Activated CD4-positive, alpha-beta memory T cell treated with anti-CD3 and anti-CD28 coated beads for 36 hours (primary cell): ENCODE measurements at regions of chr2 and their contacts with region 1.

Region 1: GRCh38 chr2:63841254-63842022 is at the start of gene UGP2:
- DNase-seq: peak; percentile 91
- H3K4me3 Mint-ChIP-seq: peak within 1 kb of the TSS; percentile 99
- H3K27ac Mint-ChIP-seq: peak within 1 kb of the TSS; percentile 100
- H3K4me1 Mint-ChIP-seq: peaks cover 44% of the 10 kb centered on the region
- H3K27me3 Mint-ChIP-seq: no peaks in the 10 kb centered on the region
- total RNA-seq, gene UGP2: 113 to 119 TPM

Region 2: GRCh38 chr2:62705007-62705829 is 1136.2 kb before region 1 on chr2 and contains the start of gene EHBP1:
- CTCF ChIA-PET with region 1: no interaction called
- POLR2A ChIA-PET with region 1: no interaction called
- intact Hi-C with region 1: loop called (anchors 10 kb)
- DNase-seq: peak; percentile 98
- H3K4me3 Mint-ChIP-seq: peak within 1 kb of the TSS; percentile 76
- H3K27ac Mint-ChIP-seq: peak within 1 kb of the TSS; percentile 74
- H3K4me1 Mint-ChIP-seq: peaks cover 28% of the 10 kb centered on the region
- H3K27me3 Mint-ChIP-seq: no peaks in the 10 kb centered on the region
- total RNA-seq, gene EHBP1: 23.5 to 23.6 TPM

Region 3: GRCh38 chr2:63614983-63615945 is 226.2 kb before region 1 on chr2:
- CTCF ChIA-PET with region 1: no interaction called
- POLR2A ChIA-PET with region 1: no interaction called
- intact Hi-C with region 1: no loop called
- DNase-seq: no peak
- H3K4me3 Mint-ChIP-seq: no peak overlapping the region
- H3K27ac Mint-ChIP-seq: no peak overlapping the region
- H3K4me1 Mint-ChIP-seq: no peaks in the 10 kb centered on the region
- H3K27me3 Mint-ChIP-seq: peaks cover 7% of the 10 kb centered on the region

Region 4: DNA sequence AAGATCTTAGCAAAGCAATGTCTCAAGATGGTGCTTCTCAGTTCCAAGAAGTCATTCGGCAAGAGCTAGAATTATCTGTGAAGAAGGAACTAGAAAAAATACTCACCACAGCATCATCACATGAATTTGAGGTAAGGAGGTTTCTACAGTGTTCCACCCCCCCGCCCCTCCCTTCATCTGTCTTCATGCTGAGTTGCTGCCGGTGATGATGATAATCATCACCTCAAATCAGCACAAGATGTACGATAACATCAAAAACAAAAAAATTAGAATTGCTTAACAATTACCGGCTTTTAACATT is 14.8 kb after region 1 on chr2:
- CTCF ChIA-PET with region 1: interaction called, 16 read pairs
- POLR2A ChIA-PET with region 1: interaction called, 29 read pairs
- intact Hi-C with region 1: loop called (anchors 1 kb)
- DNase-seq: peak; percentile 77
- H3K4me3 Mint-ChIP-seq: peak overlapping the region; percentile 54
- H3K27ac Mint-ChIP-seq: peak overlapping the region; percentile 90
- H3K4me1 Mint-ChIP-seq: peaks cover 59% of the 10 kb centered on the region
- H3K27me3 Mint-ChIP-seq: no peaks in the 10 kb centered on the region

Region 5: GRCh38 chr2:63882395-63883105 is 41.1 kb after region 1 on chr2:
- CTCF ChIA-PET with region 1: no interaction called
- POLR2A ChIA-PET with region 1: no interaction called
- intact Hi-C with region 1: loop called (anchors 2 kb)
- DNase-seq: peak; percentile 21
- H3K4me3 Mint-ChIP-seq: no peak overlapping the region
- H3K27ac Mint-ChIP-seq: no peak overlapping the region
- H3K4me1 Mint-ChIP-seq: peaks cover 24% of the 10 kb centered on the region
- H3K27me3 Mint-ChIP-seq: no peaks in the 10 kb centered on the region

Region 6: GRCh38 chr2:63926800-63927199 is 85.4 kb after region 1 on chr2:
- CTCF ChIA-PET with region 1: no interaction called
- POLR2A ChIA-PET with region 1: no interaction called
- intact Hi-C with region 1: no loop called
- DNase-seq: no peak
- H3K4me3 Mint-ChIP-seq: no peak overlapping the region
- H3K27ac Mint-ChIP-seq: no peak overlapping the region
- H3K4me1 Mint-ChIP-seq: peaks cover 3% of the 10 kb centered on the region
- H3K27me3 Mint-ChIP-seq: no peaks in the 10 kb centered on the region

Region 7: GRCh38 chr2:64036034-64036705 is 194.7 kb after region 1 on chr2:
- CTCF ChIA-PET with region 1: no interaction called
- POLR2A ChIA-PET with region 1: no interaction called
- intact Hi-C with region 1: loop called (anchors 5 kb)
- DNase-seq: peak; percentile 27
- H3K4me3 Mint-ChIP-seq: peak overlapping the region; percentile 3
- H3K27ac Mint-ChIP-seq: peak overlapping the region; percentile 75
- H3K4me1 Mint-ChIP-seq: peaks cover 48% of the 10 kb centered on the region
- H3K27me3 Mint-ChIP-seq: peaks cover 2% of the 10 kb centered on the region